Stomach (tissue), 19 donors: ENCODE measurements at regions of chr22 and their contacts with region 1.

Region 1: DNA sequence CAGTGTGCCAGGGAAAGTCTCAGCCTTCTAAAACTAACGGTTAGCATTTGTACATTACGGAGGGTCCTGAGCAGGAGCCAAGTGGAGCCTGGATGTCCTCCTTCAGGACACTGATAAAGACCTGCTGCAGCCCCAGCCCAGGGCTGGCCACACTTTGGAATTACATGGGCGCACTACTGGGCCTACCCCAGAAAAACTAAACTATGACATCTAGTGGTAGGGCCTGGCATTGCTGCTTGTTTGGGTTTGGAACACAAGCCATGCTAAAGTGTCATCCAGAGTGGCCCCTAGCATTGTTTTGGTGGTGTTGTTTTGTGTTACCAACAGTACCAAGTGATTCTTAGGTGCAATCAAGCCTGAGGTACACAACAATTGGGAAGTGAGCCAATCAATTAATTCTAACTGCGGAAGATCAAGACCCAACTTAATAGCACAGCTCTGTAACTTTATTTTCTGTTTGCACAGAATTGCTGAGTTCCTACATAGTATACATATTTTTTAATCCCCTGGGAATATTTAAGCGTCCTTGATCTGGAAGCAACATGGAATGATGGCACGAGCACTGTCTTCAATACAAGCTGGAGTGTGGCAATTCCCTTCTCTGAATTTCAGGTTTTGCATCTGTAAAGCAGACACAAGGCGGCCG is 340.7 kb downstream of the LARGE1 start:
- DNase-seq: peak; percentile 68 to 77
- H3K4me3 ChIP-seq: no peak overlapping the region
- H3K27ac ChIP-seq: peak overlapping the region in 2 of 5 donors; percentile 13 to 38
- H3K4me1 ChIP-seq: peaks cover 9 to 26% (median 20%) of the 10 kb centered on the region in 4 donors
- H3K27me3 ChIP-seq: no peaks in the 10 kb centered on the region
- CTCF ChIP-seq: peak in 6 of 7 experiments; percentile 19 to 91 (median 88)
- EP300 ChIP-seq: no peak
- POLR2A ChIP-seq: no peak

Region 2: DNA sequence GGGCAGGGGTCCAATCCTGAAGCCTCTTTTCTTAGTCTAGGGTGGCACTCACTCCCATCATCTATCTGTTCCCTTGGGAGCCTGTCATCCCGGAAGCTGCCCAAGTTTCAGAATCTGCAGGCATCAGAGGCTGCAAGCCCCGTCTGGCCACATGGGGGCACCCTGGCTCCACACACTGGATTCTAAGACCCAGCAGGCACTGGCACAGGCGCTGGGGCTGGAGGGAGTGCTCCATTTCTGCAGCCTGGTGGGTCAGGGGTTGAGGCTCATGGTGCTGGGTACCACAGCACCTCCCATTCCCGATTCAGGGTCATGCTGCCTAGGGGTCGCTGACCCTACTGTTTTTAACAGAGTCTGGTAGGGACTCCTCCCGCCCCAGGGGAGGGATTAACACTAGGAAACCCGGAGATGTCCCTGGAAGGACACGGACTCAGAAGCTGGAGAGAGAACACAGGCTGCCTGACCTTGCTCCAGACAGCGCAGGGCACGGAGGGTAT is 277.5 kb before region 1 on chr22:
- intact Hi-C with region 1: loop called (anchors 10 kb)
- DNase-seq: peak; percentile 88 to 91
- H3K4me3 ChIP-seq: no peak overlapping the region
- H3K27ac ChIP-seq: peak overlapping the region in 3 of 5 donors; percentile 7 to 20 (median 14)
- H3K4me1 ChIP-seq: peaks cover 5 to 25% (median 14%) of the 10 kb centered on the region in 4 donors
- H3K27me3 ChIP-seq: no peaks in the 10 kb centered on the region
- CTCF ChIP-seq: peak in 5 of 7 experiments; percentile 84 to 88 (median 86)
- EP300 ChIP-seq: no peak
- POLR2A ChIP-seq: no peak

Region 3: GRCh38 chr22:33524511-33525260 is 54.9 kb before region 1 on chr22:
- intact Hi-C with region 1: loop called (anchors 5 kb)
- DNase-seq: no peak
- H3K4me3 ChIP-seq: no peak overlapping the region
- H3K27ac ChIP-seq: no peak overlapping the region
- H3K4me1 ChIP-seq: peaks cover 0 to 13% (median 9%) of the 10 kb centered on the region in 4 donors
- H3K27me3 ChIP-seq: no peaks in the 10 kb centered on the region
- CTCF ChIP-seq: no peak
- EP300 ChIP-seq: no peak
- POLR2A ChIP-seq: no peak